Mammary epithelial cell (primary cell): ENCODE measurements at regions of chr20 and their contacts with region 1.

Region 1: GRCh38 chr20:52312132-52312729 is 120.7 kb upstream of the ZFP64 start:
- DNase-seq: peak; percentile 32
- H3K4me3 ChIP-seq: no peak overlapping the region
- H3K27ac ChIP-seq: no peak overlapping the region
- H3K4me1 ChIP-seq: no peaks in the 10 kb centered on the region
- H3K27me3 ChIP-seq: no peaks in the 10 kb centered on the region
- CTCF ChIP-seq: peak; percentile 73 to 80

Region 2: DNA sequence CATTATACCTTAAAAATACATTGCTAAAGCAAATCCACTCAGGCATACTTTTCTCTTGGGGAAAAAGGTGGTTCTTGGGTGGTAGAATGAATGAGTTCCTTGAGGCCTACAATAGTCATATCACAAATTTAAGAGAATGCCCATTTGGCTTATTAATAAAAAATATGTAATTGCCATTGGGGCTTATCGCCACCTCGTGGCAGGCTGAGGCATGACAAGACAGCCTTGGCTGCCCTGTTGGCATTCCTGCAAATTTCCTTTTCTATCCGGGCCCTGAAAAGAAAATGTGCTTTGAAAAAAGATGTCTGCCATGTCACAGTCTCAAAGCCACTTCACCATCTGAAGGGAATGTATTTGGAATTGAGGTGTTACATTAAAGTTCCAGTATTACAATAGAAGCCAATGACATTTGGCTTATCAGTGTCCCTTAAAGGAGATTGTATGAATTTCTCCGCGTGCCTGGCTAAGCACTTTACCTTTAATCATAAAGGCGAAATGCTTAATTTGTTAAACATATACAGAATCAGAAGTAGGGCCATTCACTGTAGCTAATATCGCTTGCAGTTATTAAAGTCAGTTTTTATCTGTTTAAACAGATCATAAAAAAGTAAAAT is 67.6 kb after region 1 on chr20:
- CTCF ChIA-PET with region 1: interaction called, 3 read pairs
- dilution Hi-C with region 1: no loop called
- in situ Hi-C with region 1: no loop called
- intact Hi-C with region 1: loop called (anchors 1 kb)
- DNase-seq: no peak
- H3K4me3 ChIP-seq: no peak overlapping the region
- H3K27ac ChIP-seq: no peak overlapping the region
- H3K4me1 ChIP-seq: no peaks in the 10 kb centered on the region
- H3K27me3 ChIP-seq: no peaks in the 10 kb centered on the region
- CTCF ChIP-seq: peak; percentile 84 to 89

Region 3: DNA sequence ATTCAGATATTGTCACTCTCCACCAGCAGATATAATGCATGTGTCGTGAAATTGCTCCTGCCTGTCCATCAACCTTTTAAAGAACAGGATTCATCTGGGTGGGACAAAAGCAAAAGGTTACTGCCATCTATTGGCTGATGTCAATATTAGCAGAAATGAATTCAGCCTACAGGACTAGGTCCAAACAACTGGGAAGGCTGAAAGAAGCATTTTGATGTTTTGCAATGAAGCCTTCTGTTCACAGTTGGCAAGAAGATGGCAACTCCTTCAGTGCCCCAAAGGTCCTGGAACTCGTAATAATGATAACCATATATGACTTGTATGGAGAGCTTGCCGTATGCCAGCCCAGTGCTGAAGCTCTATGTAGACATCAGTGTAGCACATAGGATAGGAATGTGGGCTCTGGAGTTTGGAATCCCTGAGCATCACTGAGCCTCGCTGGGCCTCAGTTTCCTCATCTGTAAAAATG is 1750.6 kb after region 1 on chr20:
- CTCF ChIA-PET with region 1: no interaction called
- dilution Hi-C with region 1: no loop called
- in situ Hi-C with region 1: no loop called
- intact Hi-C with region 1: loop called (anchors 10 kb)
- DNase-seq: peak; percentile 39
- H3K4me3 ChIP-seq: no peak overlapping the region
- H3K27ac ChIP-seq: no peak overlapping the region
- H3K4me1 ChIP-seq: peaks cover 10% of the 10 kb centered on the region
- H3K27me3 ChIP-seq: no peaks in the 10 kb centered on the region
- CTCF ChIP-seq: peak; percentile 67 to 77